PC-3 (cell line): ENCODE measurements at regions of chr10 and their contacts with region 1.

Region 1: DNA sequence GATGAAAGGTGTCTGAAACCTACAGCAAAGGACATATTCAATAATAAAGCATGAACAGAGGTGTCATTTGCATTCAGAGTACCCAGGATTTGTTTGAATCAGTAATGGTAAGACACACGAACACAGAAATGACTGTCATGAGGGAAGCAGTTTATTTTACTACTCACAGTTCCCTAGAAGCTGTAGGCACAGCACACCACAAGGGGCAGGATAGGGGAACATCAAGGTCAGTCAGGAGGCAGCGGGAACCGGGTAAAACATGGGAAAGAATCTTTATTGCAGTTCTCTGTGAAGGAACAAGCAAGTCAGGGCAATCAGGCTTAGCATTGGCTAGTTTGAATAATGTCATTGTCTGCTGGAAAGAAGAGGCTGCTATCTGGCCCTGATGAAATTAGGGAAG is 70.2 kb upstream of the PDSS1 start:
- DNase-seq: peak; percentile 4
- ATAC-seq: no peak
- H3K4me3 ChIP-seq: no peak overlapping the region
- H3K27ac ChIP-seq: no peak overlapping the region
- H3K4me1 ChIP-seq: no peaks in the 10 kb centered on the region
- H3K27me3 ChIP-seq: peaks cover 53% of the 10 kb centered on the region
- CTCF ChIP-seq: no peak

Region 2: GRCh38 chr10:25766687-25767221 is 860.6 kb before region 1 on chr10:
- CTCF ChIA-PET with region 1: no interaction called
- POLR2A ChIA-PET with region 1: no interaction called
- intact Hi-C with region 1: no loop called
- DNase-seq: no peak
- ATAC-seq: no peak
- H3K4me3 ChIP-seq: no peak overlapping the region
- H3K27ac ChIP-seq: no peak overlapping the region
- H3K4me1 ChIP-seq: no peaks in the 10 kb centered on the region
- H3K27me3 ChIP-seq: peaks cover 9% of the 10 kb centered on the region; the same call in 1 of the 2 replicates
- CTCF ChIP-seq: no peak

Region 3: GRCh38 chr10:27319752-27320561 is 692.6 kb after region 1 on chr10:
- CTCF ChIA-PET with region 1: no interaction called
- POLR2A ChIA-PET with region 1: no interaction called
- intact Hi-C with region 1: loop called (anchors 5 kb)
- DNase-seq: no peak
- ATAC-seq: no peak
- H3K4me3 ChIP-seq: no peak overlapping the region
- H3K27ac ChIP-seq: no peak overlapping the region
- H3K4me1 ChIP-seq: no peaks in the 10 kb centered on the region
- H3K27me3 ChIP-seq: no peaks in the 10 kb centered on the region
- CTCF ChIP-seq: no peak

Region 4: GRCh38 chr10:27345455-27345920 is 718.2 kb after region 1 on chr10:
- CTCF ChIA-PET with region 1: no interaction called
- POLR2A ChIA-PET with region 1: no interaction called
- intact Hi-C with region 1: loop called (anchors 5 kb)
- DNase-seq: no peak
- ATAC-seq: no peak
- H3K4me3 ChIP-seq: no peak overlapping the region
- H3K27ac ChIP-seq: no peak overlapping the region
- H3K4me1 ChIP-seq: no peaks in the 10 kb centered on the region
- H3K27me3 ChIP-seq: peaks cover 6% of the 10 kb centered on the region; the same call in 1 of the 2 replicates
- CTCF ChIP-seq: no peak